ENCODE measurements at regions of chr2 and their contacts with region 1.

Region 1: DNA sequence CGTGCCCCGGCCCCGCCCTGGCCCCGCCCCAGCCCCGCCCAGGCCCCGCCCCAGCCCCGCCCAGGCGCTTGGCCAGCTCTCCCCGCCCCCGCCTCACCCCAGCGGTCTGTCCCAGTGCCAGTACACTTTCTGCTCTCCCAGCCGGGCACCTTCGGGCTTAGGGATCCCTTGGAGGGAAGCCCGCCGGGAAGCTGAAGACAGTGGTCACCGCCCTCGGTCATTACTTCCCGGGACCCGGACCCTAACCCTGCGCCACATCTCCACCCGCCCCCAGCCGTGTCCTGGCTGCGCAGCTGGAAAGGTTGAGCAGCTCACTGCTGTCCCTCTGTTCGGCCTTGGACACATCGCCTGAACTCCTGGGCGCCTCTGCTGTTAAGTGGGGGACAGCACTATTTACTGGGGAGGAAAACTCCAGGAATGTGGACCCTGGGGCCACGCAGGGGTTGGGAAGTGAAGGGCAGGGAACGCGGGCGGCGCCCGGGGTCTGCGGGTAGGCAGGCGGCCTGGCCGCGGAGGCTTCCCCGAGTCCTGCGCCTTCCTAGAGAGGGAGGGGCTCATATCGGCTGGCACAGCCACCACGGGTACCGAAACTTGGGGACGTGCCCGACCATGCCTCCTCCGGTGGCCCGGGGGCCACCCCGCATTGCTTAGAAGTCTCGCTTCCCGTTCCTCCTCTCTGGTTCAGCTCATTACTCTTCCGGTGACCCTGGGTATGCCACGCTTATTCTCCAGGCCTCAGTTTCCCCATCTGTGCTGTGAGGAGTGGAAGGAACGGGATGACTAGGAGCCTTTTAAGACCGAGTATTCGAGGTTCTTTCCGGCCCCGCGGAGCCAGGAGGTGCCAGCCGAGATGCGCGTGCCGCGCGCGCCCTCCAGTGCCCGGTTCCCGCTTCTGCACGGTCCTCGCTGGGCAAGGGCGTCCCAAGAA is 121.0 kb downstream of the GYPC start:
- DNase-seq: peak; percentile 89
- ATAC-seq: peak; percentile 96

Region 2: DNA sequence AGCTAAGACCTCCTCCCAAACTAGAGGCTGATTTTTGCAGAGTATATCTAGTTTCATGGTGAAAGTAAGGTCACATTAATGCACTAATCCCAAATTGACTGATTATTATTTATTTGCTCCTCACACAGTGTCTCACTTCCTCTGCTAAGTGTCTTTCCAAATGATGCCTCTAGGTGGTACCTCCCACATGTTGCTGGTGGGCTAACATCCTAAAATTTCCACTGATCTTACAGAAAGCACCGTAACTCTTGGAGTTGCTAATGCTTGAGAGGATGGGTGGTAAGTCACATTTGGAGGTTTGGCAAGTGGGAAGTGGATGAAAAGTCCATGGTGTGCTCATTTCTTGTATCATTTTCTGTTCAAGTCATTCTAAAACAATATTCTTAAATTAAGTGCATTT is 549.7 kb before region 1 on chr2:
- intact Hi-C with region 1: loop called (anchors 10 kb)
- DNase-seq: no peak
- ATAC-seq: no peak

Region 3: DNA sequence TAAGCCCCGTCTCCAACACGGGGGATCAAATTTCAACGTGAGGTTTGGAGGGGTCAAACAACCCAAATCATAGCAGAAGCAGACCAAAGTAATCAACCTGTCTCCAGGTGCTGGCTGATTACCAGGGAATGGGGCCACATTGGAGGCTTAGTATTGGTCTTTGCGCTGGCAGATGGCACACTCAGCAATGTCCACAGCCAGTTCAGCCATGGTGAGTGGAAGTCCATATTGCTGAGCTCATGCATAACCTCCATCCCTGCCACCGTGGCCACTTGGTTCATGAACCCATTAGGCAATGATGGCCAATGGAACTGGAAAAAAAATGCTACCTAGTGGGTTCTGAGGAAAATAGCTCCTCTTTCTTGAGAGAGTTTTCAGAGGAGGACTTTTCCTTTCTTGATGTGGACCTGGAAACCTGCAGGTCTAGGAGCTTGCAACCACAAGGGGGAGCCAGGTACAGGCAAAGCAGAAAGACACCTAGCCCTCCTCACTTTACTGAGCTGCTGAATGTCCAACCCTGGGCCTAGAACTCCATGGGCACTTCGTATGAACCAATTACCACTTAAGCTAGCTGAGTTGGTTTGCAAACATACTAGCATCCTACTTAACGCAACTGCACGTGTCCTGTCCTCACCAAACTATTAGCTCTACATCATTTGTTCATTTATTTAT is 249.0 kb before region 1 on chr2:
- intact Hi-C with region 1: loop called (anchors 5 kb)
- DNase-seq: peak; percentile 72
- ATAC-seq: peak; percentile 81

Measured in left ventricle myocardium superior (tissue), 1 donor.